HepG2 (cell line): ENCODE measurements at regions of chr14 and their contacts with region 1.

Region 1: GRCh38 chr14:91737619-91738018 is 5.7 kb upstream of the CATSPERB start:
- DNase-seq: no peak
- ATAC-seq: no peak
- H3K4me3 ChIP-seq: no peak overlapping the region
- H3K27ac ChIP-seq: no peak overlapping the region
- H3K4me1 ChIP-seq: no peaks in the 10 kb centered on the region
- H3K27me3 ChIP-seq: no peaks in the 10 kb centered on the region
- CTCF ChIP-seq: no peak
- EP300 ChIP-seq: no peak
- POLR2A ChIP-seq: no peak
- RAD21 ChIP-seq: no peak

Region 2: DNA sequence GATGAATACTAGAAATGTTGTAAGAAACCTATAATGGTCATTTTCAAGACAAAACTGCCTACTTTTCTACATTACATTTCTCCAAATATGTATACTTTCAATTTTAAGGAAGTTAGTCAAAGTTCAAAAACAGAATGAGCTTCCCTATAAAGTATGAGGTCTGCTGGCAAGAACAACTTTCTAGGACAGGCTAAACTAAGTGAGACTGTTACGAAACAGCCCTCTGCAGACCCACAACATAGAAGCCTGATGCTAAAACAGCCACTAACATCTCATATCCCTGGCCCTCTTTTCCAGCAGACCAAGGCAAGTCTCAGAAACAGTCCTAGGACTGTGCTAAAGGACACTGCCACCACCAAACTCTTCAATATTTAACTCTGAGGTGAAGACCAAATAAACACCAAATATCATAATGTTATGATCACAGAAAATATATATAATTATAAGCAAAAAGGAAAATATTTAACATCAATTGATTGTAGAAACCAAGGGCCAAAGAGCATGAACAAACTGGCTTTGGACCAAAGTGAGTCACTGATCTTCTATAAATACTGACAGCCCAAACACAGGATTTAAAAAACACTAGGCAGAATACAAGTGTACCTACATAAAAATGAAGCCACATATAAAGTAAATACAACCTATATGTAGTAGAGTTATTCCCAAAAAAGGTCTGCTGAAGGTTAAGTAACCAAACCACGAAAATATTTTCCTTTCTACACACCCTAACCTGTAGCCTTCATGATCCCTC is 255.2 kb before region 1 on chr14:
- CTCF ChIA-PET with region 1: no interaction called
- POLR2A ChIA-PET with region 1: no interaction called
- in situ Hi-C with region 1: no loop called
- intact Hi-C with region 1: no loop called
- DNase-seq: no peak
- ATAC-seq: no peak
- H3K4me3 ChIP-seq: no peak overlapping the region
- H3K27ac ChIP-seq: no peak overlapping the region
- H3K4me1 ChIP-seq: no peaks in the 10 kb centered on the region
- H3K27me3 ChIP-seq: no peaks in the 10 kb centered on the region; a peak in 1 of 5 replicates
- CTCF ChIP-seq: no peak
- EP300 ChIP-seq: no peak
- POLR2A ChIP-seq: no peak
- RAD21 ChIP-seq: no peak

Region 3: DNA sequence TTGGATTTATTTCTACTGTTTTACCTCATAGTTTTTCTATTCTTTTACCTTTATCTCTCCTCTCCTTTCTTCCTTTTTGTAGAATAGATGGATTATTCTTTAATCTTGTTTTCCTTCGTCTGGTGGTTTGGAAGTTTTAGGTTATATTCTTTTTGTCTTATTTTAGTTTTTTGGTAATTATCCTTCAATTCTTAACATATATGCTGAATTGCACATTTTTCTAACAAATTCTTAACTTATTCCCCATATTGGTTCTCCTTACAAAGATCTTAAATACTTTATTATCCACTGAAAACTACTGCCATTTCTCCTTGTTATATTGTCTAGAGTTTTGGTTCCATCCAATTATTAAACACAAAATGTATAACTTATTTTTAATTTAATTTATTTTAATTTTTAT is 48.0 kb before region 1 on chr14:
- CTCF ChIA-PET with region 1: no interaction called
- POLR2A ChIA-PET with region 1: no interaction called
- in situ Hi-C with region 1: no loop called
- intact Hi-C with region 1: loop called (anchors 2 kb)
- DNase-seq: no peak
- ATAC-seq: no peak
- H3K4me3 ChIP-seq: no peak overlapping the region
- H3K27ac ChIP-seq: no peak overlapping the region
- H3K4me1 ChIP-seq: no peaks in the 10 kb centered on the region
- H3K27me3 ChIP-seq: no peaks in the 10 kb centered on the region; a peak in 1 of 5 replicates
- CTCF ChIP-seq: no peak
- EP300 ChIP-seq: no peak
- POLR2A ChIP-seq: no peak
- RAD21 ChIP-seq: no peak